ENCODE measurements at regions of chr4 and their contacts with region 1.

Region 1: GRCh38 chr4:114072781-114073180 is 93.3 kb upstream of the ARSJ start:
- DNase-seq: no peak
- H3K4me3 Mint-ChIP-seq: no peak overlapping the region
- H3K27ac Mint-ChIP-seq: no peak overlapping the region
- H3K4me1 Mint-ChIP-seq: no peaks in the 10 kb centered on the region
- H3K27me3 Mint-ChIP-seq: peaks cover 31% of the 10 kb centered on the region

Region 2: GRCh38 chr4:113278324-113278934 is 794.4 kb before region 1 on chr4:
- intact Hi-C with region 1: loop called (anchors 2 kb)
- DNase-seq: peak; percentile 85
- H3K4me3 Mint-ChIP-seq: no peak overlapping the region
- H3K27ac Mint-ChIP-seq: no peak overlapping the region
- H3K4me1 Mint-ChIP-seq: no peaks in the 10 kb centered on the region
- H3K27me3 Mint-ChIP-seq: peaks cover 22% of the 10 kb centered on the region

Region 3: GRCh38 chr4:113781439-113782040 is 291.2 kb before region 1 on chr4:
- intact Hi-C with region 1: loop called (anchors 5 kb)
- DNase-seq: no peak
- H3K4me3 Mint-ChIP-seq: no peak overlapping the region
- H3K27ac Mint-ChIP-seq: no peak overlapping the region
- H3K4me1 Mint-ChIP-seq: peaks cover 13% of the 10 kb centered on the region
- H3K27me3 Mint-ChIP-seq: no peaks in the 10 kb centered on the region

Region 4: DNA sequence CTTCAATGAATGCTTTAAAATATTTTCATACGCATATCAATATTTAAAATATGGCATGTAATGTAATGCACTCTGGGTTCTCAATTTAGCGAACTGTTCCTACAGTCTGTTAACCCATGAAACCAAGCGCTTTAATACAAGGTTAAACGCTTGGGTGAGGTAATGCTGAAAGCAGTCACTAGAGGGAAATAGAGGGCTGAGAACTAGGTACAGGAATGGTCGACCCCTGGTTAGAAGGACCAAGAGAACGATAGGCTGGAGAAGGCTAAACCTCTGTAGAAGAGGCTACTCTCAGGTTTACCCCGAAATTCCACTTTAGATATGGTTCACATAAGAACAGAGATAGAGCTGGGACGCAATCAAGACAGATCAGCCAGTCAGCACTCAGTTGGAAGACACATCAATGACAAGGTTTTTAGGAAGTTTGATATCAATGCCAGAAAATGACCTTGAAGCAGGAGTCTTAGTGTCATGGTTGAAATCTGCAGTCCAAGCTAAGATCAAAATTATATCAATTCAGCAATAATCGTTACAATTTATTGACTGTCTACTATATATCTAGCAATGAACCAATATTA is 120.2 kb before region 1 on chr4:
- intact Hi-C with region 1: loop called (anchors 1 kb)
- DNase-seq: peak; percentile 68
- H3K4me3 Mint-ChIP-seq: no peak overlapping the region
- H3K27ac Mint-ChIP-seq: no peak overlapping the region
- H3K4me1 Mint-ChIP-seq: peaks cover 3% of the 10 kb centered on the region
- H3K27me3 Mint-ChIP-seq: peaks cover 23% of the 10 kb centered on the region

Region 5: DNA sequence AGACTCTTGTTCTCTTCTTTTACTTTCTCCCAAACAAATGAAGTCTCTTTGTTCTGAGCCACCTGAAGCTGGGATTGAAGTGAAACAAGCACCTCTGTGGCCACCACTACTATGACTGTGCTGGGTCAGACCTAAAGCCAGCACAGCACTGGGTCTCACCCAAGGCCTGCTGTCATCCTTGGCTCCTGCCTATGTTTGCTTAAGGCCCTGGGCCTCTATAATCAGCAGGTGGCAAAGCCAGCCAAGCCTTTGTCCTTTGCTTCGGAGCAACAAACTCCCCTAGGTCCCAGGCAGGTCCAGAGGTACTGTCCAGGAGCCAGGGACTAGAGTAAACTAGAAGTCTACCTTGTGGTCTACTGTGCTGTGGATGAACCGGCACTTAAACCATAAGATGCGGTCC is 127.2 kb after region 1 on chr4:
- intact Hi-C with region 1: no loop called
- DNase-seq: no peak
- H3K4me3 Mint-ChIP-seq: no peak overlapping the region
- H3K27ac Mint-ChIP-seq: no peak overlapping the region
- H3K4me1 Mint-ChIP-seq: no peaks in the 10 kb centered on the region
- H3K27me3 Mint-ChIP-seq: no peaks in the 10 kb centered on the region